Endothelial cell of umbilical vein (primary cell): ENCODE measurements at regions of chr3 and their contacts with region 1.

Region 1: GRCh38 chr3:113051302-113051711 is 60.5 kb downstream of the GTPBP8 start:
- DNase-seq: peak; percentile 82
- H3K4me3 ChIP-seq: no peak overlapping the region
- H3K27ac ChIP-seq: no peak overlapping the region
- H3K4me1 ChIP-seq: peaks cover 3% of the 10 kb centered on the region
- H3K27me3 ChIP-seq: peaks cover 0 to 11% of the 10 kb centered on the region in 2 experiments
- CTCF ChIP-seq: peak; percentile 75 to 79
- POLR2A ChIP-seq: no peak

Region 2: GRCh38 chr3:112512320-112512719 is 539.0 kb before region 1 on chr3:
- CTCF ChIA-PET with region 1: no interaction called
- POLR2A ChIA-PET with region 1: no interaction called
- dilution Hi-C with region 1: no loop called
- intact Hi-C with region 1: no loop called
- DNase-seq: no peak
- H3K4me3 ChIP-seq: no peak overlapping the region
- H3K27ac ChIP-seq: no peak overlapping the region
- H3K4me1 ChIP-seq: no peaks in the 10 kb centered on the region
- H3K27me3 ChIP-seq: no peaks in the 10 kb centered on the region
- CTCF ChIP-seq: no peak
- POLR2A ChIP-seq: no peak

Region 3: DNA sequence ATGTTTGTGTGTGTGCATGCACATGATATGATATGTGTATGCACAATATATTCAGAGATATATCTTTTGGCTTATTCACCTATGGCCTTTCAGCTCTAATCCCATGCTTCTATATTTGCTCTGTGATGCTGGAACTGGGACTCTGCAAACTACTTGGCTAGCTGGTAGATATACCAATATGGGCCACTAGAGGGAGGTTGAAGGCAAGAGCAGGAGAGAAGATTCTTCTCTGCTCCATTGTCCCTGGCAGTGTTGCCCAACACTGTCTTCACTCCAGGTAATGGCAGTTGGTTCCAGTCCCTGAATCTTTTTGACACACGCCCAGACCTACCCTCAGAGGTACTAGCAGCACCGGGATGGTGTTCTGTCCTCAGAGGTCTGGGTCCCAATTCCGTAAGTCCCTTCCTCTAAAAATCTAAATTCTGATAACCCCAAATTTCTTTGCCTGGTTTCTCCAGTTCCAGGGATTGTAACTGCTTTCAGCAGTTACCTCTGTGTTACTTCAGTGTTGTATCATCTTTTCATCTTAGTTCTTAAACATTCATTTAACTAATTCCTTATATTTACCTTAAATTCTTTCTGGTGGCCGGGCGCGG is 15.8 kb before region 1 on chr3:
- CTCF ChIA-PET with region 1: interaction called, 11 read pairs
- POLR2A ChIA-PET with region 1: no interaction called
- dilution Hi-C with region 1: no loop called
- intact Hi-C with region 1: no loop called
- DNase-seq: peak; percentile 47
- H3K4me3 ChIP-seq: no peak overlapping the region
- H3K27ac ChIP-seq: no peak overlapping the region
- H3K4me1 ChIP-seq: no peaks in the 10 kb centered on the region
- H3K27me3 ChIP-seq: no peaks in the 10 kb centered on the region
- CTCF ChIP-seq: peak; percentile 73 to 83
- POLR2A ChIP-seq: no peak

Region 4: DNA sequence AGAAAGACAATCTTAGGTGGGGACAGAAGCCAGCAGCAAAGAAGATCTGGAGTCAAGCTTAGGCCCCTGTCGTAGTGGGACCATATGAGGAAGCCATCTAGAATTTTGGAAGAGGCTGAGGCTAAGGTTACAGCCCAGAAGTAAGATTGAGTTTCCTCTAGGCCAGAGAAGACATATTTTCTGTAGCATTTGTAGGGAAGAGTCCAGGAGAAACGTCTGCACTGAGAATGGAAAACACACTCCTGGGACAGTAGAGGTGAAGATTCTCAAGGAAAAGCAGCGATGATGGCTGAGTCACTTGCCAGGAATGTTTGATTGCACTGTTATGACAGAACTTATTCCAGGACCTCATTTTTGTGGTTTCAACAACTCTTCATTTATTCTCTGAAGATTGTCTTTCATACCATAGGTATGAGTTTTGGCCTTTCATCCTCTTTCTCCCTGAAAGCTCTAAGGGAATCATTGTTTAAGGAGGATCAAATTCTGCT is 46.7 kb after region 1 on chr3:
- CTCF ChIA-PET with region 1: no interaction called
- POLR2A ChIA-PET with region 1: no interaction called
- dilution Hi-C with region 1: no loop called
- intact Hi-C with region 1: no loop called
- DNase-seq: no peak
- H3K4me3 ChIP-seq: no peak overlapping the region
- H3K27ac ChIP-seq: no peak overlapping the region
- H3K4me1 ChIP-seq: no peaks in the 10 kb centered on the region
- H3K27me3 ChIP-seq: no peaks in the 10 kb centered on the region
- CTCF ChIP-seq: no peak
- POLR2A ChIP-seq: no peak

Region 5: GRCh38 chr3:113136071-113136470 is 84.8 kb after region 1 on chr3:
- CTCF ChIA-PET with region 1: interaction called, 3 read pairs
- POLR2A ChIA-PET with region 1: no interaction called
- dilution Hi-C with region 1: no loop called
- intact Hi-C with region 1: loop called (anchors 1 kb)
- DNase-seq: peak; percentile 20
- H3K4me3 ChIP-seq: no peak overlapping the region
- H3K27ac ChIP-seq: no peak overlapping the region
- H3K4me1 ChIP-seq: no peaks in the 10 kb centered on the region
- H3K27me3 ChIP-seq: no peaks in the 10 kb centered on the region
- CTCF ChIP-seq: peak; percentile 27 to 30
- POLR2A ChIP-seq: no peak

Region 6: GRCh38 chr3:113211330-113212149 is 160.2 kb after region 1 on chr3 and contains the start of gene BOC:
- CTCF ChIA-PET with region 1: no interaction called
- POLR2A ChIA-PET with region 1: no interaction called
- dilution Hi-C with region 1: no loop called
- intact Hi-C with region 1: loop called (anchors 10 kb)
- DNase-seq: peak; percentile 10
- H3K4me3 ChIP-seq: peak within 1 kb of the TSS; percentile 53 to 59 (median 53)
- H3K27ac ChIP-seq: no peak within 1 kb of the TSS
- H3K4me1 ChIP-seq: no peaks in the 10 kb centered on the region
- H3K27me3 ChIP-seq: peaks cover 30 to 53% of the 10 kb centered on the region in 2 experiments
- CTCF ChIP-seq: no peak
- POLR2A ChIP-seq: no peak
- total RNA-seq, gene BOC: not detected in 2 replicates

Region 7: GRCh38 chr3:113228498-113229286 is 177.4 kb after region 1 on chr3:
- CTCF ChIA-PET with region 1: no interaction called
- POLR2A ChIA-PET with region 1: no interaction called
- dilution Hi-C with region 1: no loop called
- intact Hi-C with region 1: no loop called
- DNase-seq: no peak
- H3K4me3 ChIP-seq: no peak overlapping the region
- H3K27ac ChIP-seq: no peak overlapping the region
- H3K4me1 ChIP-seq: no peaks in the 10 kb centered on the region
- H3K27me3 ChIP-seq: peaks cover 1 to 6% of the 10 kb centered on the region in 2 experiments
- CTCF ChIP-seq: no peak
- POLR2A ChIP-seq: no peak

Region 8: DNA sequence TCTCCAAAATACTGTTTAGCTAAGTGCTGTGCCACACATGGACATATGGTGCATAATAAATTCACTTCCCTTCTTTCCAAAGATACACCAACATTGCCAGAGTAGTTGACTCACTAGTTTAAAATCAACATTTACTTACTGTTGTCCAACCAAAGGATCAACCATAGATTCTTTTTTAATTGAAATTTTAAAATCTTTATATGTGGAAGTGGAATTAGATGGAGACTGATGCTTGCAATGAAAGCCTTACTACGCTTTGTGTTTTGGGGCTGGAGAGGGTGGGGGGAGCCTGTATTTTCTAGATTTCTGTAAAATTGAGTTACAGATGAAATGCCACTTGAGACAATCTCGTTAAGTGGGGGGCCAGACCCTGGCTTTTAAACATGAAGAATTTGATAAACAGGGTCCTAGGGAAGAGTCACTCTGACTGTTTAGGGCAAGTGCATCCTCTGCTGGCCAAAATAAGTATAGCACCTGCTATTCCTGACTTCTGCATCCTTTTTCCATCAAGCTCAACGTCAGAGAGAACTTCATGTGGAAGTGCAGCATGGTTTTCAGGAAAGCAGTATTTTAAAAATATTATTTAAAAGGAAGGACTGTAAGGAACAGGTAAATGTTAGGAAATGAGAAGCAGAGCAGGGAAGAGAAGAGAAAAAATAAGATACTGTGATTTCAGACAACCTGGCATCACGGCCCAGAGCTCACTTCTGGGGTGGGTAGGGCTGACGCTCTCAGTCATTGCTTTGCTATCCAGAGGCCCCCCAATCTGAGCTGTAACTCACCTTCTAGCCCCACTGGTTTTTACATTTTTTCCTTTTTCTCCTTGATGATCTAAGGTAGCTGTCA is 236.7 kb after region 1 on chr3:
- CTCF ChIA-PET with region 1: interaction called, 44 read pairs
- POLR2A ChIA-PET with region 1: no interaction called
- dilution Hi-C with region 1: no loop called
- intact Hi-C with region 1: loop called (anchors 1 kb)
- DNase-seq: peak; percentile 75
- H3K4me3 ChIP-seq: no peak overlapping the region
- H3K27ac ChIP-seq: no peak overlapping the region
- H3K4me1 ChIP-seq: peaks cover 8% of the 10 kb centered on the region
- H3K27me3 ChIP-seq: no peaks in the 10 kb centered on the region
- CTCF ChIP-seq: peak; percentile 89 to 95
- POLR2A ChIP-seq: no peak

Region 9: GRCh38 chr3:113495035-113495434 is 443.7 kb after region 1 on chr3:
- CTCF ChIA-PET with region 1: no interaction called
- POLR2A ChIA-PET with region 1: no interaction called
- dilution Hi-C with region 1: no loop called
- intact Hi-C with region 1: loop called (anchors 1 kb)
- DNase-seq: peak; percentile 61
- H3K4me3 ChIP-seq: no peak overlapping the region
- H3K27ac ChIP-seq: no peak overlapping the region
- H3K4me1 ChIP-seq: peaks cover 25% of the 10 kb centered on the region
- H3K27me3 ChIP-seq: no peaks in the 10 kb centered on the region
- CTCF ChIP-seq: peak in 1 of 2 donors; percentile 38
- POLR2A ChIP-seq: no peak